OCI-LY7 (cell line): ENCODE measurements at regions of chr11 and their contacts with region 1.

Region 1: DNA sequence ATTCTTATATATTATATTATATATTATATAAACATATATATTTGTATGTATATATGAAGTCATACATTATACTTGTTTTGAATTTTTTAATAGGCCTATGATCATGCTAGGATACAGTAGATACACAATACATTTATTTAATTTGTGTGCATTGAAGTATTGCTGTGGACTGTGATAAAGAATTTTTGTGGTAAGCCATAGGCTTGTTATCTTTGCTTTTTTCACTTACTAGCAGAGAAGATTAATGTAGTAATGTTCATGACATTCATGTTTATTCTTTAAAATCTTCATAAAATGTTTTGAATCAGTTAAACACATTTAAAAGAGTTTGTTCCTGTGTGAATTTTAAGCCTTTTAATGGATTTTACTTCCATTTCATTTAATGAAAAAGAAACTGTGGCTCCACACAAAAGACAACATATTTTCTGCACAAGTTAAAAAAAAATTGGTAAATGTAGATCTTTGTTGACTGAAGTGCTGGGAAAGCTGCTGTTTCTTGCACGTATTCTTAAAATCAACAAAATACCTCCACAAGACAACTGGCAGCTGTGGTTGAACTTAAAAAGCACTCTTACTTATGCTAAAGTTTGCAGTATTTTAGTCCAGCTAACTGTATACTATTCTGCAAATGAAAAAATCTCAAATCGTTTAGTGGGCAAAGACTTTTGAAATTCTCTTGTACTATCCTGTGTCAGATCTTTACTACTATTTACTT is 156.2 kb downstream of the TMEM135 start:
- DNase-seq: no peak
- H3K4me3 ChIP-seq: no peak overlapping the region
- H3K27ac ChIP-seq: no peak overlapping the region
- H3K4me1 ChIP-seq: no peaks in the 10 kb centered on the region
- CTCF ChIP-seq: no peak

Region 2: DNA sequence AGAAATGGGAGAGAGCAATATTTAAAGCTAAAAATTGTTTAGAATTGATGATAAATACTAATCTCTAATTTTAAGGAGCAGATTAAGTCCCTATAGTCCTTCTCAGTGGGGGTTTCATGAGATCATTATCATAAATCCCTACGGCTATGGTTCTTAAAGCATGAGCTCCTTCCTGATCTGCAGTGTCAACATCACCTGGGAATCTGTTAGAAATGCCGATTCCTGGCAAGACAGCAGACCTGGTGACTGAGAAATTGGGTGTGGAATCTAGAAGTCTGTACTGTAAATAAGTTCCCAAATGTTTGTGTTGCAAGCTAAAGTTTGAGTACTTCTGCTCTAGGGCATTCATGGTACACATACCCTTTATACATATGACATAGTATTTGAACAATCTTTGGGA is 879.3 kb before region 1 on chr11:
- CTCF ChIA-PET with region 1: no interaction called
- POLR2A ChIA-PET with region 1: no interaction called
- intact Hi-C with region 1: no loop called
- DNase-seq: no peak
- H3K4me3 ChIP-seq: no peak overlapping the region
- H3K27ac ChIP-seq: no peak overlapping the region
- H3K4me1 ChIP-seq: no peaks in the 10 kb centered on the region
- CTCF ChIP-seq: no peak

Region 3: GRCh38 chr11:87228820-87229219 is 34.9 kb after region 1 on chr11:
- CTCF ChIA-PET with region 1: no interaction called
- POLR2A ChIA-PET with region 1: interaction called, 9 read pairs
- intact Hi-C with region 1: loop called (anchors 5 kb)
- DNase-seq: no peak
- H3K4me3 ChIP-seq: no peak overlapping the region
- H3K27ac ChIP-seq: no peak overlapping the region
- H3K4me1 ChIP-seq: no peaks in the 10 kb centered on the region
- CTCF ChIP-seq: no peak

Region 4: GRCh38 chr11:87338046-87338639 is 144.2 kb after region 1 on chr11:
- CTCF ChIA-PET with region 1: no interaction called
- POLR2A ChIA-PET with region 1: no interaction called
- intact Hi-C with region 1: no loop called
- DNase-seq: no peak
- H3K4me3 ChIP-seq: no peak overlapping the region
- H3K27ac ChIP-seq: no peak overlapping the region
- H3K4me1 ChIP-seq: no peaks in the 10 kb centered on the region
- CTCF ChIP-seq: no peak

Region 5: DNA sequence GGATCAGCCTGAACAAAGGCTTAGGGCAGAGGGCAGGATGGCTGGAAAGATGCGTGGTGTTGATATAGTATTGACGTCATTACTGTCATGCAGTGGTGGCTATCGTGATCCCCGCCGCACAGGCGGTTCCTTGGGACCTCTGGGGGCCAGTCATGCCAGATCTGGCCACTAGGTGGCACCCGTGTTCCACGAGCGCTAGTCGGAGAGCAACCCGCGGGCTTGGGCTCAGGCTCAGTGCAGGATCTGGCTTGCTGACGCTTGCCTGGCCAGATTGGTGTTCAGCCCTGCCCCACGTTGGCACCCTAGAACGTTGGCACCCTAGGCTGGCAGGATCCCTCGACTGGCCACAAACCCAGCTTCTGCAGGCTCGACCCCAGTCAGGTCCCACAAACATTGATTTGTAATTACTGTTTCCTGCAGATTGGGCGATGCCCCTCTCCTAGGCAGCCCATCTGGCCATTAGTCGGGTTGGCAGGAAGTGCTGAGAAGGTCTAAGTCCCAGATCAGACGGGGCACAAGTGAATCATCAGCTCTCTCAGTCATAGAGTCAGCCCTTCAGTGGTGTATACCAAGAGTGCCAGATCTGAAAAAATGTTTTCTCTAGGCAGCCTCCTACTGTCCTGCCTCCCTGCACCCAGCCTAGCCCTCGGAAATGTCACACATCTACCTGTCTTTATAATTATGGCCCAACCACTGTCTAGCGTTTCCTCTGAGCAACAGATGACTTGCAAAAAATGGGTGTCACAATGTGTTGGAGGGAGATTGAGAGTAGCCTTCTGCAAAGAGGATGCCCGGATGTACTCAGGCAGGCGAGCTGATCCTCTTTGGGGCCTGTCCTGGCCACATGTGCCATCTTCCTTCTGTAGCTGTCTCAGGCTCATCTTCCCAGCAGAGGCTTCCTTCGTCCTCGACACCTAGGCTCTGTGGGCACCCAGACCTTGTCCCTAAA is 159.1 kb after region 1 on chr11:
- CTCF ChIA-PET with region 1: no interaction called
- POLR2A ChIA-PET with region 1: no interaction called
- intact Hi-C with region 1: no loop called
- DNase-seq: peak; percentile 91
- H3K4me3 ChIP-seq: no peak overlapping the region
- H3K27ac ChIP-seq: peak overlapping the region; percentile 92
- H3K4me1 ChIP-seq: peaks cover 79% of the 10 kb centered on the region
- CTCF ChIP-seq: peak; percentile 96